Thyroid gland (tissue), 4 donors: ENCODE measurements at regions of chr6 and their contacts with region 1.

Region 1: GRCh38 chr6:107847844-107848802 is 24.0 kb upstream of the SCML4 start:
- DNase-seq: peak; percentile 83 to 89
- H3K4me3 ChIP-seq: peak overlapping the region in 2 of 3 donors; percentile 32 to 38
- H3K27ac ChIP-seq: no peak overlapping the region
- H3K4me1 ChIP-seq: peaks cover 10 to 15% of the 10 kb centered on the region in 2 donors
- H3K27me3 ChIP-seq: no peaks in the 10 kb centered on the region
- CTCF ChIP-seq: peak; percentile 71 to 96 (median 93)
- POLR2A ChIP-seq: no peak

Region 2: DNA sequence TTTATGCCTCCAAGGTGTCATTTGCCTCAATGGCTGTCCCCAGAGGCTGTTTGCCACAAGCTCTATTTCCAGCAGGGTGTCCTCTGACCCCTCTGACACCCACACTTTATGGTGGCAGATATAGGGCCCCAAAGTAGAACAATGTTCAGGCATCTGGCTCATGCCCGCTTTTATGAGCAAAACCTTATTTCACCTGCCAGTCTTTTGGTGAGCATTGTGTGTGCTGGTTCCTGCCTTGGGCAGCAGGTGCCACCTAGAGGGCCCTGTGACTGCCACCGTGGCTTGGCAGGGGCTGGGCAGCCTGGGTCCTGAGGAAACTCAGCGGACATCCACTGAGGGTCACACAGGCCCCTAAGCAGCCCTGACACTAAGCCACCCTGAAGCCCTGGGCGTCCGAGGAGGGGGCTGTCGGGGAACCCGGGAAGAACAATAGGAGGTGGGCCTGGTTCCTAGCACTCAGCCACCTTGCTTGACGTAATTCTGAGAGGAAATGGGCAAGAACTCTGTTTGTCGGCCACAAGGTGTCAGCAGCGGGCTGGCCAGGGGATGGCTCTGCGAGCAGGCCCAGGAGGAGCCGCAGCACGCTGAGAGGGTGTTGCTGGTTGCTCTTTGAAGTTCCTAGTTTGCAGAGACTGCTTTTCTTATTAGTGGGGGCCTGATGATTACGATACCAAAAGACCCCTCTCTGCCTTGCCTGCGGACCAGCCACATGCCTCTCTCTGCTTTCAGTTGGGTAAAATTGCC is 173.0 kb before region 1 on chr6:
- intact Hi-C with region 1: loop called (anchors 10 kb)
- DNase-seq: peak; percentile 75 to 86
- H3K4me3 ChIP-seq: peak overlapping the region in 1 of 3 donors; percentile 17
- H3K27ac ChIP-seq: peak overlapping the region in 1 of 3 donors; percentile 54
- H3K4me1 ChIP-seq: peaks cover 0 to 7% of the 10 kb centered on the region in 2 donors
- H3K27me3 ChIP-seq: no peaks in the 10 kb centered on the region
- CTCF ChIP-seq: peak; percentile 75 to 97 (median 90)
- POLR2A ChIP-seq: no peak

Region 3: GRCh38 chr6:107704347-107705013 is 143.6 kb before region 1 on chr6:
- intact Hi-C with region 1: loop called (anchors 10 kb)
- DNase-seq: no peak
- H3K4me3 ChIP-seq: no peak overlapping the region
- H3K27ac ChIP-seq: no peak overlapping the region
- H3K4me1 ChIP-seq: no peaks in the 10 kb centered on the region
- H3K27me3 ChIP-seq: no peaks in the 10 kb centered on the region
- CTCF ChIP-seq: peak; percentile 36 to 90 (median 70)
- POLR2A ChIP-seq: no peak